A549 (cell line): ENCODE measurements at regions of chr10 and their contacts with region 1.

Region 1: GRCh38 chr10:21273400-21273932 is 252.0 kb downstream of the SKIDA1 start:
- DNase-seq: no peak
- ATAC-seq: peak; percentile 28 to 47; a peak in 4 of 6 replicates
- H3K4me3 ChIP-seq: no peak overlapping the region
- H3K27ac ChIP-seq: peak overlapping the region; percentile 63 to 74
- H3K4me1 ChIP-seq: peaks cover 37% of the 10 kb centered on the region
- CTCF ChIP-seq: no peak
- EP300 ChIP-seq: no peak
- POLR2A ChIP-seq: no peak
- RAD21 ChIP-seq: no peak

Region 2: DNA sequence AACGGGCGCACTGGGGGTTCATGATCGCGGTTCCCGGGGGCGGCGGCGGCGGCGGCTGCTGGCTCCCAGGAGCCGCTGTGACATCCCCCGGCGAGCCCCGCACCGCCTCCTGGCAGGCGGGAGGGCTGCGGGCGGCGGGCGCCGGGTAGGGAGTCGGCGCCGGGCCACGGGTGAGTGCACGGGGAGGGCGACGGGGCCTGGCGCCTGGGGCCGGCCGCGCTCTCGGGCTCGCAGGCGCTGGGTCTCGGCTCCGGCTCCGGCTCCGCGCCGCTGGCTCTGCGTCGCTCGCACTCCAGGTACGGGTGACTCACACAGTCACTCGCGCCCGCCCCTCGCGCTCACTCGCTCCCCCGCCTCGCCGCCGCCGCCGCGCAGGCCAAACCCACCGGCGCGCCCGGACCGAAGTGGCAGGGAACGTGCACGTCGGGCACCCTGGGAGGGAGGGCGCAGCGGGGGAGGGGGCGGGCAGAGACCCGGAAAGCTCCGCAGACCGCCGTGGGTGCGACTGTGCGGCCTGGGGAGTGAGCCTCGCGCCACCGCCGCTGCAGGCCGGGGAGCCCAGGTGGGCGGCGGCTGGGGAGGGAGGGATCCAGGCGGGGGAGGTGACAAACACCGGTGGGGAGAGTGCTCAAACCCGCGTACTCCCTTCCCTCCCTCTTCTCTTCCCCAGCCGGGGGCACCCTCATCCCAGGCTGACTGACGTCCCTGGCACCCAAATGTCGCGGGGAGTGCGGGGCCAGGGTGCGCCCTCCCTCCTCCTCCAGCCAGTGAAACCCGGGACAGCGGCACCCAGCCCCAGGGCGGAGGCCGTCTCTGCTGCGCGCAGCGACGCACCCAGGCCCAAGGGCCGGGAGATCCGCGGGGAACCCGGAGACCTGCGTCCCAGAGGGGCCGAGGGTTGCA is 99.4 kb before region 1 on chr10:
- CTCF ChIA-PET with region 1: interaction called, 13 read pairs
- POLR2A ChIA-PET with region 1: no interaction called
- DNase-seq: peak; percentile 66 to 82
- ATAC-seq: peak; percentile 80 to 86
- H3K4me3 ChIP-seq: peak overlapping the region; percentile 79
- H3K27ac ChIP-seq: peak overlapping the region; percentile 92 to 94
- H3K4me1 ChIP-seq: peaks cover 29% of the 10 kb centered on the region
- CTCF ChIP-seq: peak; percentile 20; the same call in 2 of the 3 replicates
- EP300 ChIP-seq: peak in 1 of 2 experiments; percentile 25; a peak in 1 of 5 replicates
- POLR2A ChIP-seq: peak; percentile 10; the same call in 1 of the 2 replicates
- RAD21 ChIP-seq: peak; percentile 35 to 54

Region 3: DNA sequence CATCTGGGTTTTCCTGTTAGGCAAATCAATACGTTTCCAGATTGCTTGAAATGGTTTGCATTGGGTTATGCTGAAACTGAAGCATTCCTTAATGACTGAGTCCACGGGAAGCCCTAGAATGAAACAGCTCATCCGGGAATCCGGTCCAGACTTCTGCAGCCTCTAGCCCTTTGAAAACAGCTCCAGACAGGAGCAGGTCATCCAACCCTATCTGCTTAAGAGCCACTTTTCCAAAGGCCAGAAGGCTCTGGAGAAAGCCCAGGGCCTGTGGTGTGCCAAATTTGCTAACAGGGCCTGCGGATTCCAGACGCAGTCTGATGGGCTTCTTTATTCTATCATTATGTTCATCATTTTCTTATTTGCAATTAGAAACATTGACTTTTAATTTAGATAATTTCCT is 13.4 kb before region 1 on chr10:
- CTCF ChIA-PET with region 1: interaction called, 11 read pairs
- POLR2A ChIA-PET with region 1: no interaction called
- DNase-seq: no peak
- ATAC-seq: no peak
- H3K4me3 ChIP-seq: no peak overlapping the region
- H3K27ac ChIP-seq: no peak overlapping the region
- H3K4me1 ChIP-seq: peaks cover 1% of the 10 kb centered on the region
- CTCF ChIP-seq: no peak
- EP300 ChIP-seq: no peak
- POLR2A ChIP-seq: no peak
- RAD21 ChIP-seq: no peak